PC-3 (cell line): ENCODE measurements at regions of chr11 and their contacts with region 1.

Region 1: DNA sequence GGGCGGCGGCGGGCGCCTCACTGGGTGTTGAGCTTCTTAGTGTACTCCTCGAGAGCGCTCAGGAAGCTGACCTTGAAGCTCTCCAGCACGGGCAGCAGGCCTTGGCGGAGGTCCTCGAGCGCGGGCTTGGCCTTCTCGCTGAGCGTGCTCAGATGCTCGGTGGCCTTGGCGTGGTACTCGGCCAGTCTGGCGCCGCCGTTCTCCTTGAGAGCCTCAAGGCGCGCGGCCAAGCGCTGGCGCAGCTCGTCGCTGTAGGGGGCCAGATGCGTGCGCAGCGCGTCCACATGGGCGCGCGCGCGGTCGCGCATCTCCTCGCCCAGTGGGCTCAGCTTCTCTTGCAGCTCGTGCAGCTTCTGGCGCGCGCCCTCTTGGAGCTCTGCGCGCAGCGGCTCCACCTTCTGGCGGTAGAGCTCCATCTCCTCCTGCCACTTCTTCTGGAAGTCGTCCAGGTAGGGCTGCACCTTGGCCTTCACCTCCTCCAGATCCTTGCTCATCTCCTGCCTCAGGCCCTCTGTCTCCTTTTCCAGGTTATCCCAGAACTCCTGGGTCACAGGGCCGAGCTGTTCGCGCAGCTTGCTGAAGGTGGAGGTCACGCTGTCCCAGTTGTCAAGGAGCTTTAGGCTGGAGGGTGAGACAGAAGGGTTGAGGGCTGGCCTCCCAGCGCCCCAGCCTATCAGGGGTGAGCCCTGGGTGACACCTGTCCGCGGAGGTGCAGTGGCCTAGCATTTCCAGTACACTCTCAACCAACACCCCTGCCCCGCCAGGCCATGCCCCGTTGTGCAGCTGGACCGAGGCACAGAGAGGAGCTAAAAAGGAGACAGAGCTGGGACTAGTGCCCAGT is 1.4 kb downstream of the APOA1 start:
- DNase-seq: peak; percentile 98
- ATAC-seq: peak; percentile 86
- H3K4me3 ChIP-seq: peak overlapping the region; percentile 63
- H3K27ac ChIP-seq: no peak overlapping the region
- H3K4me1 ChIP-seq: peaks cover 7% of the 10 kb centered on the region
- H3K27me3 ChIP-seq: no peaks in the 10 kb centered on the region
- CTCF ChIP-seq: peak; percentile 88

Region 2: GRCh38 chr11:116772443-116773202 is 63.4 kb before region 1 on chr11 and contains the start of gene BUD13:
- CTCF ChIA-PET with region 1: interaction called, 3 read pairs
- POLR2A ChIA-PET with region 1: no interaction called
- intact Hi-C with region 1: loop called (anchors 5 kb)
- DNase-seq: peak; percentile 94
- ATAC-seq: peak; percentile 86
- H3K4me3 ChIP-seq: peak within 1 kb of the TSS; percentile 98
- H3K27ac ChIP-seq: peak within 1 kb of the TSS; percentile 75
- H3K4me1 ChIP-seq: peaks cover 23% of the 10 kb centered on the region
- H3K27me3 ChIP-seq: no peaks in the 10 kb centered on the region
- CTCF ChIP-seq: no peak
- total RNA-seq, gene BUD13: 28.9 and 38.0 TPM in 2 replicates

Region 3: GRCh38 chr11:116787786-116788486 is 48.1 kb before region 1 on chr11 and contains the start of gene ZPR1:
- CTCF ChIA-PET with region 1: interaction called, 16 read pairs
- POLR2A ChIA-PET with region 1: interaction called, 7 read pairs
- intact Hi-C with region 1: loop called (anchors 2 kb)
- DNase-seq: peak; percentile 64
- ATAC-seq: peak; percentile 81
- H3K4me3 ChIP-seq: peak within 1 kb of the TSS; percentile 83
- H3K27ac ChIP-seq: peak within 1 kb of the TSS; percentile 11; the same call in 1 of the 2 replicates
- H3K4me1 ChIP-seq: peaks cover 37% of the 10 kb centered on the region
- H3K27me3 ChIP-seq: no peaks in the 10 kb centered on the region
- CTCF ChIP-seq: no peak
- total RNA-seq, gene ZPR1: 86.5 and 89.5 TPM in 2 replicates